ENCODE measurements at regions of chr11 and their contacts with region 1.

Region 1: GRCh38 chr11:1515082-1516060 is 28.8 kb upstream of the MOB2 start:
- DNase-seq: peak; percentile 61 to 95 (median 87)

Region 2: GRCh38 chr11:1202776-1203504 is 312.4 kb before region 1 on chr11:
- intact Hi-C with region 1: loop called (anchors 5 kb)
- DNase-seq: peak; percentile 19 to 82 (median 63)

Region 3: GRCh38 chr11:1309498-1310317 is 205.7 kb before region 1 on chr11 and contains the start of gene TOLLIP:
- intact Hi-C with region 1: loop called (anchors 10 kb)
- DNase-seq: peak; percentile 82 to 99 (median 96)

Region 4: DNA sequence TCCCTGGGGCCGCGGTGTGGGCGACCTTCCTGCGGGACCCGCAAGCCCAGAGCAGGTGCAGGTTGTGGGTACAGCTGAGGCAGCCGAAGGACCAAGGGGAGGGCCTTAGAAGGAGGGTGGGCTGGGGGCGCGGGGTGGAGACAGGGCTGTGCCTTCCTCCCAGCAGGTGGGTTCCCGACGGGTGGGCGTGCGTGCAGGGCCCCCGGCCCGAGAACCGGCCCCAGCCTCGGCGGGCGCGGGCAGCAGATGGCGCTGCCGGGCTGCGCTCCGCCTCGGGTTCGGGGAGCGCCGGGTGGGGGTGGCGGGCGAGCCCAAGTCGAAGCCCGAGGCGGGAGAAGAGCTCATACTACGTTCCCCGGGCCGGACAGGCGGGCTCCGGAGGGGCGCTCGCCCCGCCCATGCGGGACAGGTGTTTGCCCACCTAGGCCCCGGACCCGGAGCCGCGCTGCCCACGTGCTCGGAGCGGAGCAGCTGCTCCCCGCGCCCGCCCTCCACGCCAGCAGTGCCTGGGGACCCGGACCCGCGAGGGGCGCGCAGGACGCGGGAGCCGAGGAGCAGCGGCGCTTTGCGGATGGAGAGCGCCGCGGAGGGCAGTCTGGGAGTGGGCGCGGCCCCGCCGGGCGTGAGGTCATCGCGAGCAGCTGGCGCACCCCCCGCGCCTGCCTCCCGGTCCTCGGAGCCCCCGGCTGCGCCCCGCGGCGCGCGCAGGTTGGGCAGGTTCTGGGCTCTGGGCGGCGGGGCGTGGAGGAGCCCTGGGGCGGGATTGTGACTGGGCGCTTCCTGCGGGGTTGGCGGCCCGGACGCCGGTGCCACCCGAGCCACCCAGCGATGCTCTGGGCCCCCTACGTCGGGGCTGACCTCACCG is 31.4 kb after region 1 on chr11:
- intact Hi-C with region 1: no loop called
- DNase-seq: peak in 35 of 42 donors; percentile 38 to 83 (median 69)

Measured in head of caudate nucleus (tissue), 42 donors.